HepG2 (cell line): ENCODE measurements at regions of chr12 and their contacts with region 1.

Region 1: DNA sequence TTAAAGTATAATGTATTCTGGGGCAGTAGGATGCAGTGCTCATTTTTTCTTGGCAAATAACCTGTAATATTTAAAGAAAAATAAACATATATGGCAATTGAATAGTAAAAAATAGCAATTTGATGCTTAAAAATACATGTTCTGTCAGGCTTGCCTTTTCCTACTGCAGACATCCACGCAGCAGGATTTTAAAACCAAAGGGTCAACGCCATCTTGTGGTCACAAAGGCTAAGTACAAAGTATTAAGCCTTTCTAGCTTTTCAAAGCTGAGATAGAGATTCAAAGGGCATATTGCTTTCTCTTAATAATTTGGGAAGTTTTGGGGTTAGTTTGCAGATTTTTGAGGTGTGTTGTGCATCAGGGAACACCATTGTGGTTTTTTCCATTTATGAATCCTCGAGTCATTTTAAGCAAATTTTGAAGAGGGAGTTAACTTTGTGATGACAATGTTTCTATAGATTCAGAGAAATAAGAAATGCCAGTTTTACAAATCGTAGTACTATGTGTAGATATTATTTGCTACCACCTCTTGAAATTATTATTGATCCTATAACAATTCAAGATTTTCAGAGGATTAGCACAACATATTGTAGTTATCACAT is 4.7 kb upstream of the CCER1 start:
- DNase-seq: peak; percentile 26
- ATAC-seq: peak; percentile 74
- H3K4me3 ChIP-seq: no peak overlapping the region
- H3K27ac ChIP-seq: no peak overlapping the region
- H3K4me1 ChIP-seq: no peaks in the 10 kb centered on the region
- H3K27me3 ChIP-seq: no peaks in the 10 kb centered on the region
- CTCF ChIP-seq: peak; percentile 69
- EP300 ChIP-seq: no peak
- POLR2A ChIP-seq: no peak
- RAD21 ChIP-seq: no peak

Region 2: GRCh38 chr12:90940872-90941499 is 18.7 kb before region 1 on chr12:
- CTCF ChIA-PET with region 1: interaction called, 11 read pairs
- POLR2A ChIA-PET with region 1: no interaction called
- in situ Hi-C with region 1: no loop called
- intact Hi-C with region 1: no loop called
- DNase-seq: peak; percentile 28
- ATAC-seq: peak; percentile 79
- H3K4me3 ChIP-seq: no peak overlapping the region
- H3K27ac ChIP-seq: no peak overlapping the region
- H3K4me1 ChIP-seq: no peaks in the 10 kb centered on the region
- H3K27me3 ChIP-seq: no peaks in the 10 kb centered on the region
- CTCF ChIP-seq: peak; percentile 68
- EP300 ChIP-seq: no peak
- POLR2A ChIP-seq: no peak
- RAD21 ChIP-seq: no peak

Region 3: GRCh38 chr12:90978117-90978770 is 18.6 kb after region 1 on chr12:
- CTCF ChIA-PET with region 1: no interaction called
- POLR2A ChIA-PET with region 1: no interaction called
- in situ Hi-C with region 1: no loop called
- intact Hi-C with region 1: no loop called
- DNase-seq: peak; percentile 16
- ATAC-seq: peak; percentile 77
- H3K4me3 ChIP-seq: no peak overlapping the region
- H3K27ac ChIP-seq: no peak overlapping the region
- H3K4me1 ChIP-seq: no peaks in the 10 kb centered on the region
- H3K27me3 ChIP-seq: no peaks in the 10 kb centered on the region
- CTCF ChIP-seq: peak; percentile 64
- EP300 ChIP-seq: no peak
- POLR2A ChIP-seq: no peak
- RAD21 ChIP-seq: no peak

Region 4: GRCh38 chr12:91007531-91008290 is 48.1 kb after region 1 on chr12:
- CTCF ChIA-PET with region 1: no interaction called
- POLR2A ChIA-PET with region 1: no interaction called
- in situ Hi-C with region 1: no loop called
- intact Hi-C with region 1: no loop called
- DNase-seq: no peak
- ATAC-seq: no peak
- H3K4me3 ChIP-seq: no peak overlapping the region
- H3K27ac ChIP-seq: no peak overlapping the region
- H3K4me1 ChIP-seq: no peaks in the 10 kb centered on the region
- H3K27me3 ChIP-seq: no peaks in the 10 kb centered on the region
- CTCF ChIP-seq: no peak
- EP300 ChIP-seq: no peak
- POLR2A ChIP-seq: no peak
- RAD21 ChIP-seq: no peak

Region 5: GRCh38 chr12:91382081-91382543 is 422.5 kb after region 1 on chr12:
- CTCF ChIA-PET with region 1: no interaction called
- POLR2A ChIA-PET with region 1: no interaction called
- in situ Hi-C with region 1: no loop called
- intact Hi-C with region 1: no loop called
- DNase-seq: peak; percentile 37
- ATAC-seq: peak; percentile 74
- H3K4me3 ChIP-seq: no peak overlapping the region
- H3K27ac ChIP-seq: no peak overlapping the region
- H3K4me1 ChIP-seq: no peaks in the 10 kb centered on the region
- H3K27me3 ChIP-seq: no peaks in the 10 kb centered on the region
- CTCF ChIP-seq: peak; percentile 83
- EP300 ChIP-seq: no peak
- POLR2A ChIP-seq: no peak
- RAD21 ChIP-seq: peak; percentile 57

Region 6: GRCh38 chr12:91406920-91407341 is 447.3 kb after region 1 on chr12:
- CTCF ChIA-PET with region 1: no interaction called
- POLR2A ChIA-PET with region 1: no interaction called
- in situ Hi-C with region 1: no loop called
- intact Hi-C with region 1: no loop called
- DNase-seq: no peak
- ATAC-seq: no peak
- H3K4me3 ChIP-seq: no peak overlapping the region
- H3K27ac ChIP-seq: no peak overlapping the region
- H3K4me1 ChIP-seq: no peaks in the 10 kb centered on the region
- H3K27me3 ChIP-seq: no peaks in the 10 kb centered on the region; a peak in 1 of 5 replicates
- CTCF ChIP-seq: no peak
- EP300 ChIP-seq: no peak
- POLR2A ChIP-seq: no peak
- RAD21 ChIP-seq: no peak